Posterior vena cava (tissue), 2 donors: ENCODE measurements at regions of chr20 and their contacts with region 1.

Region 1: GRCh38 chr20:48747784-48748569 is 79.8 kb downstream of the PREX1 start:
- DNase-seq: no peak

Region 2: DNA sequence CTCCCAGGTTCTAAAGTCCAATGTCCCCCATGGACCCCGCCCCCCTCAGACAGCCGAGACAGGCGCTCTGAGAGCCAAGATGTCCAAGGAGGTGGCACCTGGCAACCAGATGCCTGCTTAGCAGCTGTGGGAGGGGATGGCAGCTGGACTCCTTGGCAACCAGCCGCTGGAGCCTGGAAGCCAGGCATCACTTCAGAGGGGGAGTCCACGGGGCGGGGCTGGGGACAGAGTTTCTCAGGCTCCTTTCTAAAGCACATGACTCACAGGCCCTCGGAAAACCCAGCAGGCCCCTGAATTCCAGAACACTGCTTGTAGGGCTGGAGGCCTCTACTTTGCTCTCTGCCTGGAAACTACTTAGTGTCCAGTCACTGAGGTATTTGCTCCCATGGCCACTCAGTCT is 28.3 kb after region 1 on chr20:
- intact Hi-C with region 1: loop called in 1 of 2 experiments (anchors 1 kb)
- DNase-seq: peak; percentile 65

Region 3: DNA sequence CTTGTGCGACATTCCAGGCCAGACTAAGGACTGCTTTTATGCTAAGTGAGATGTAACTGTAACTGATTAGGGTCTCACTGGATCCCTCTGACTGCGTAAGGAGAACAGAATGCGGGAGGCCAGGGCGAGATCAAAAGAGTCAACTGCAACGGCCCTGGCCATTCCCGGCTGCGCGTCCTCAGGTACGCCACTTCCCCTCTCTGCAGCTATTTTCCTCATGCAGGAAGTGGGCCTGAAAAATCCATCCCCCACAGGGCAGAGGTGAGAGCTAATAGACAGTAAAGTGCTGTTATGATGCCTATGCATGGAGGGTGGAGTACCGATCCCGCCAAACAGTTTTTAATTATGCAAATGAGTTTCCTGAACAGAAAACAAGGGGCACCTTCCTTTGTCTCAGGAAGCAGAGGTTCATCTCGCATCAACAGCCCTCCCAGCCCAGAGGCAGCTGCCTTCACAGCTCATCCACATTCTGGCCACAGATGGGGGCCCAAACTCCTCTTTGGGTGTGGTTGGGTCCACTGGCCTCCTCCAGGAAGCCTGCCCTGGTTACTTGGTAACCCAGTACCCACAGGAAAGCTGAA is 70.5 kb after region 1 on chr20:
- intact Hi-C with region 1: no loop called
- DNase-seq: peak; percentile 57